ENCODE measurements at regions of chr12 and their contacts with region 1.

Region 1: GRCh38 chr12:14845350-14845750 is 2.0 kb upstream of the ART4 start:
- DNase-seq: peak; percentile 43
- H3K4me3 Mint-ChIP-seq: no peak overlapping the region
- H3K27ac Mint-ChIP-seq: no peak overlapping the region
- H3K4me1 Mint-ChIP-seq: no peaks in the 10 kb centered on the region
- H3K27me3 Mint-ChIP-seq: no peaks in the 10 kb centered on the region

Region 2: DNA sequence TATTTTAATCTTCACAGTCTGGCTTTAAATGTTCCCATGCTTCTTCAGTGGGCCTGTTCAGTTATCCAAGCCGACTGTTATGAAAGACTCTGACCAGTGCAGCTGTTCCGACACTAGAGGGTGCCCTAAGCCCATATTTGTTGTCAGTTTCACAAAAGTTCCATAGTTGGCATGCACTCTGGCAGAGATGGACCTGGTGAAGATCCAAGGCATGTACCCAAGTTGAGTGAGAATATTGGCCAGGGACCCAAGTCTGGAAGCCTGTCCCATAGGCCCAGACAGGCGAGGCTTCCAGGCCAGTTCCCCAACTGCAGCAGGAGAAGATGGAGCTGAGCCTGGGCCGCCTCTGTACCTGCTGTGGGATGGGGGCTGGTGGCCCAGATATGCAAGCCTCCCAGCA is 121.6 kb before region 1 on chr12:
- CTCF ChIA-PET with region 1: interaction called, 23 read pairs
- POLR2A ChIA-PET with region 1: no interaction called
- intact Hi-C with region 1: loop called (anchors 1 kb)
- DNase-seq: peak; percentile 65
- H3K4me3 Mint-ChIP-seq: no peak overlapping the region
- H3K27ac Mint-ChIP-seq: no peak overlapping the region
- H3K4me1 Mint-ChIP-seq: no peaks in the 10 kb centered on the region
- H3K27me3 Mint-ChIP-seq: peaks cover 2% of the 10 kb centered on the region

Region 3: DNA sequence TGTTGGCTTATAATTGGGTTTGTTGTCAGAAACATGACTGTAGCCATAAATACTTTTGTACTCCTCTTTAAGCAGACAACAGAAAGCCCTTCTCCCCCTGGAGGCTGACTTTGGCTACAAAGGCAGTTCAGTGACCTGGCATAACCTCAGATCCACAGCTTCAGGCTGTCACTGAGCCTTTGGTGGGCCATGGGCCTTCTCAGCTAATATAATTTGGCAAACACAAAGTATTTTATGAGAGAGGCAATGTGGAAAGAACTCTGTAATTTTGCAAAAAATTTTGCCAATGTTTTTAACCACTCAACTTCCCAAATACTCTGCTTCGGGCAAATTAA is 55.8 kb after region 1 on chr12:
- CTCF ChIA-PET with region 1: no interaction called
- POLR2A ChIA-PET with region 1: no interaction called
- intact Hi-C with region 1: loop called (anchors 2 kb)
- DNase-seq: no peak
- H3K4me3 Mint-ChIP-seq: no peak overlapping the region
- H3K27ac Mint-ChIP-seq: no peak overlapping the region
- H3K4me1 Mint-ChIP-seq: peaks cover 9% of the 10 kb centered on the region
- H3K27me3 Mint-ChIP-seq: no peaks in the 10 kb centered on the region

Measured in activated CD4-positive, alpha-beta memory T cell treated with anti-CD3 and anti-CD28 coated beads for 36 hours (primary cell).